ENCODE measurements at regions of chr2 and their contacts with region 1.

Region 1: GRCh38 chr2:206392118-206392517 is 51.2 kb upstream of the ADAM23 start:
- DNase-seq: peak; percentile 69
- CTCF ChIP-seq: peak; percentile 50

Region 2: DNA sequence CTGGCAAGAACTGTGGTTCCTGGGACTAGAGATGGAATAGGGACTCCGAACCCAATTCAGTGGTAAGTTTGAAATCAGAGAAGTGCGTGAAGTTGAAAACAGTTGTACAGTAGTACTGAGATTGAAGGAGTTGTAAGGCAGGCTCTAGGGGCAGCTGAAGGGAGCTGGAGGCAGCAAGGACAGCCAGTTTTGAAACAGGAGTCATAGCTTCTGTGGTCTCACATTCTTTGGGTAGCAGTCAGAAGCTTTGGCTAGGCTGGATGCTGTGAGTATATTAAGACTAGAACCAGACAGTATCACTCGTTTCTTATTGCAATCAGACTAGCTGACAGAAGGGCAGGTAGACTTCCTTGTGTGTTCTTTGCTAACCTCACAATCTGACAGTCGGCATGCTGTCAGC is 13.3 kb before region 1 on chr2:
- CTCF ChIA-PET with region 1: interaction called, 13 read pairs
- POLR2A ChIA-PET with region 1: no interaction called
- DNase-seq: no peak
- CTCF ChIP-seq: no peak

Region 3: GRCh38 chr2:206410714-206411113 is 18.6 kb after region 1 on chr2:
- CTCF ChIA-PET with region 1: no interaction called
- POLR2A ChIA-PET with region 1: no interaction called
- DNase-seq: no peak
- CTCF ChIP-seq: no peak

Region 4: DNA sequence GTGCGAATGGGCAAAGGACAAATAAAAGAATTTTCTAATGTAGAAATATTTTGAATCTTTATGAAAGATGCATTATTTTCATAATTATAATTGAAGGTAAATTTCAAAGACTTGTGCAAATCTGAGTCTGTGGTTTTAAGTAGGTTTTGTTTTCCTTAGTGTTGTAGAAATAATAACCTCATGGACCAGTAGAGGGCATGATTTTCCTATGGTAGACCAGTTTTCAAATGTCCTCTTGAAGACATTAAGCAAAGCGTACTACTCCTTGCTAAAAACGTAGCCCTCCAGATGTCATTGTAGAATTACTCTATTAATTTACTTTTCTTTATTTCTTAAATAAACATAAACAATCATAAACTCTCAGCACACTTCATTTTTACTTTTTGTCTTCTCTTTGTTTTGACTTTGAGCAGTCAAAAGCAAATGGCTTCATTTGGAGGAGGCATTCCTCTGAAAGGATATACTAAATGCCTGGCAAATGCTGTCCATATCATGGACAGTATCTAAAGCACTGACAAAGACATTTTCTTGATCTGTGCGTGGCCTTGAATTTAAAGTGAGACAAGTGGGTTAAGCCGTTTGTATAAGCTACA is 164.3 kb after region 1 on chr2:
- CTCF ChIA-PET with region 1: interaction called, 11 read pairs
- POLR2A ChIA-PET with region 1: no interaction called
- DNase-seq: peak; percentile 30
- CTCF ChIP-seq: peak; percentile 50